Esophagus muscularis mucosa (tissue), 4 donors: ENCODE measurements at regions of chr6 and their contacts with region 1.

Region 1: DNA sequence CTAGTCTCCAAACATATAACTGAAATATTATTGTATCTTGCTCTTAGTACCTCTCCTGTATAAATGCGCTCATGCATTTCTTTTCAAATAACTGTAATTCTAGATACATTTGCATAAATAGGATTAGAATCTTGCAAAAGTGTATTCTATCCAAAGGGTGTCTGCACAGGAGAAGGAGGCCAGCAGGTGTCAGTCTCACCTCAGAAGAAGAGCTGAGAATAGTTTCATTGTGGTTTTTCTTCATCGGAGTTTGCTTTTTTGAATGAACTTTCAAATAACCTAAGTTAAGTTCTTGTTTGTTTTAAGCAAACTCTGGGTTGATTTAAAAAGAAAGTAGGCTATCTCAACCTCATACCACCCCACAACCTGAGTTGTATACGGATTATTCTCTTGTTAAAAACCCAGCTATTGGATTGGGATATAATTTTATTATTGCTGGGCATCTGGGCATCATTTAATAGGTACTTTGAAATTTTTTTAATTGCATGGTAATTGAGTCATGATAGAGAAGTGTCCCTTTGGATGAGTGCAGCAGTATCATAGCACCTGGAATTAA is 125.0 kb upstream of the MLIP start:
- DNase-seq: no peak
- H3K4me3 ChIP-seq: no peak overlapping the region
- H3K27ac ChIP-seq: no peak overlapping the region
- H3K4me1 ChIP-seq: peaks cover 5 to 14% (median 13%) of the 10 kb centered on the region in 4 donors
- H3K27me3 ChIP-seq: no peaks in the 10 kb centered on the region
- CTCF ChIP-seq: peak; percentile 56 to 76 (median 70)
- EP300 ChIP-seq: no peak
- POLR2A ChIP-seq: no peak

Region 2: DNA sequence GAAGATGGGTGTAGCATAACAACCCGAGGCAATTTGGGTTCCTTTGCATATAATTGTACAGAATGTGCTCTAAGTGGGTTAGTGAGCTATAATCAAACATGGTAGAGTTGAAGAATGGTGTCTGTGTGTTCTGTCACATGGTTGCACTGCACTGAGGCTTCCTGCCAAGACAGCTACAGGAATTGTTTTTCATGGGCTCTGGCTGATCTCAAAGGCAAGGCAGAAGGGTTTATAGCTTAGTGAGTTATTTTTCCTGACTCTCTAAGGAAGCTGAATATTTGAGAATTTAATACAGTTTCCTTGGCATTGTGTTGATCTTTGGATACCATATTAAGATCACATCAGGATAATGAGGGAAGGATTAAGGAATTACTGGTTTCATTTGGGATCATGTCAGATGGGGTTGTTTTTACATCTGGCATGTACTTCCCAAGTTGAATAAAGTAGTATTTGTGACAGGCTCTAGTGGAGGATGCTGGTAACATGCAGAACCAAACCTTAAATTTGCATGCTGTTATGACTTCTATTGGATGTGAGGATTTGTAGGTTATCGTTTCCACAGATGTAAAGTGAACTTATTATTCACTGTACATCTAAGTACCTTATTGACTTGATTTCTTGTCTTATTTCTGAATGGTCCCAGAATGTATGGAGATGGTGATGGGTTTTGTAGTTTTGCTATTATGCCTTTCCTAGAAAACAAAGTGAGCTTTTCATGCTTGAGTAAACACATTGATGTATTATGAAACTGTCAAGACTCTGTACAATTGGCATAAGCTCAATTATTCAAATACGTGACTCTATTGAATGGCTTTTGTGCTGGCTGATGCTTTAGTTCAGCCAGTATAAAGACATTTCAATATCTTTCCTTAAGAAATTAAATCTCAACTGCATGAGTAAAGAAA is 148.1 kb before region 1 on chr6:
- intact Hi-C with region 1: no loop called
- DNase-seq: no peak
- H3K4me3 ChIP-seq: no peak overlapping the region
- H3K27ac ChIP-seq: no peak overlapping the region
- H3K4me1 ChIP-seq: peaks cover 0 to 17% (median 15%) of the 10 kb centered on the region in 4 donors
- H3K27me3 ChIP-seq: no peaks in the 10 kb centered on the region
- CTCF ChIP-seq: no peak
- EP300 ChIP-seq: no peak
- POLR2A ChIP-seq: no peak

Region 3: GRCh38 chr6:53926525-53926924 is 59.7 kb before region 1 on chr6:
- intact Hi-C with region 1: no loop called
- DNase-seq: no peak
- H3K4me3 ChIP-seq: no peak overlapping the region
- H3K27ac ChIP-seq: peak overlapping the region in 1 of 4 donors; percentile 5
- H3K4me1 ChIP-seq: peaks cover 19 to 35% (median 23%) of the 10 kb centered on the region in 4 donors
- H3K27me3 ChIP-seq: no peaks in the 10 kb centered on the region
- CTCF ChIP-seq: no peak
- EP300 ChIP-seq: no peak
- POLR2A ChIP-seq: no peak

Region 4: GRCh38 chr6:54267798-54268197 is 281.6 kb after region 1 on chr6:
- intact Hi-C with region 1: loop called (anchors 5 kb)
- DNase-seq: no peak
- H3K4me3 ChIP-seq: no peak overlapping the region
- H3K27ac ChIP-seq: no peak overlapping the region
- H3K4me1 ChIP-seq: no peaks in the 10 kb centered on the region
- H3K27me3 ChIP-seq: no peaks in the 10 kb centered on the region
- CTCF ChIP-seq: peak; percentile 12 to 38 (median 19)
- EP300 ChIP-seq: no peak
- POLR2A ChIP-seq: no peak

Region 5: GRCh38 chr6:55069132-55069781 is 1083.0 kb after region 1 on chr6:
- intact Hi-C with region 1: loop called (anchors 5 kb)
- DNase-seq: no peak
- H3K4me3 ChIP-seq: no peak overlapping the region
- H3K27ac ChIP-seq: no peak overlapping the region
- H3K4me1 ChIP-seq: no peaks in the 10 kb centered on the region
- H3K27me3 ChIP-seq: no peaks in the 10 kb centered on the region
- CTCF ChIP-seq: peak; percentile 41 to 50 (median 42)
- EP300 ChIP-seq: no peak
- POLR2A ChIP-seq: no peak

Region 6: GRCh38 chr6:55239099-55239498 is 1252.9 kb after region 1 on chr6:
- intact Hi-C with region 1: loop called (anchors 5 kb)
- DNase-seq: no peak
- H3K4me3 ChIP-seq: no peak overlapping the region
- H3K27ac ChIP-seq: no peak overlapping the region
- H3K4me1 ChIP-seq: peaks cover 0 to 4% (median 0%) of the 10 kb centered on the region in 4 donors
- H3K27me3 ChIP-seq: no peaks in the 10 kb centered on the region
- CTCF ChIP-seq: no peak
- EP300 ChIP-seq: no peak
- POLR2A ChIP-seq: no peak